ENCODE measurements at regions of chr22 and their contacts with region 1.

Region 1: GRCh38 chr22:38506118-38506962 is at the start of gene DDX17:
- DNase-seq: peak; percentile 90 to 98 (median 94)
- ATAC-seq: peak; percentile 88
- H3K4me3 ChIP-seq: peak within 1 kb of the TSS; percentile 69
- H3K4me3 Mint-ChIP-seq: peak within 1 kb of the TSS; percentile 100
- H3K27ac ChIP-seq: peak within 1 kb of the TSS; percentile 98 to 100
- H3K27ac Mint-ChIP-seq: peak within 1 kb of the TSS; percentile 99
- H3K4me1 ChIP-seq: peaks cover 25% of the 10 kb centered on the region
- H3K4me1 Mint-ChIP-seq: peaks cover 57% of the 10 kb centered on the region
- H3K27me3 ChIP-seq: no peaks in the 10 kb centered on the region
- H3K27me3 Mint-ChIP-seq: no peaks in the 10 kb centered on the region
- CTCF ChIP-seq: no peak
- total RNA-seq, gene DDX17: 454 to 462 TPM

Region 2: GRCh38 chr22:38398609-38399461 is 107.5 kb before region 1 on chr22:
- CTCF ChIA-PET with region 1: no interaction called
- POLR2A ChIA-PET with region 1: no interaction called
- intact Hi-C with region 1: loop called (anchors 5 to 10 kb)
- DNase-seq: peak; percentile 72 to 91 (median 86)
- ATAC-seq: peak; percentile 73
- H3K4me3 ChIP-seq: peak overlapping the region; percentile 68
- H3K4me3 Mint-ChIP-seq: peak overlapping the region; percentile 86
- H3K27ac ChIP-seq: no peak overlapping the region
- H3K27ac Mint-ChIP-seq: peak overlapping the region; percentile 75
- H3K4me1 ChIP-seq: peaks cover 15% of the 10 kb centered on the region
- H3K4me1 Mint-ChIP-seq: peaks cover 35% of the 10 kb centered on the region
- H3K27me3 ChIP-seq: no peaks in the 10 kb centered on the region
- H3K27me3 Mint-ChIP-seq: no peaks in the 10 kb centered on the region
- CTCF ChIP-seq: no peak

Region 3: DNA sequence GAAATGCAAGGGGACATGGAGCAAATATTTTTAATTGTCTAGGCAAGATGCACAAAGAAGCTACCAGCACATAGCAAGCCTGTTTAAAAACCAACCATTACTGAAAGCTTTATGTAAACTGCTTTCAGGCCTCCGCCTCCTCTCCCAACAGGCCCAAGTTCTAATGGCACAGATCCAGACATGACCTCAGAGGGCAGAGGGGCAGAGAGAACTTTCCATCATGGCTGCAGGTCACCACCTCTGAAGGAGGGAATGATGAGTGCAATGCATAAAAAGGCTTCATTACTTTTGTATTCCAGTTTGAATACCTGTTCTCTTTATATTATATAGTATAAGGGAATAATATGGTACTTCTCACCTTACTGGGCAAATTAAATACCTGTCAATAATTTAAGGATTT is 15.4 kb before region 1 on chr22:
- CTCF ChIA-PET with region 1: interaction called, 3 read pairs
- POLR2A ChIA-PET with region 1: interaction called, 15 read pairs
- intact Hi-C with region 1: loop called in 1 of 2 experiments (anchors 2 kb)
- DNase-seq: no peak
- ATAC-seq: no peak
- H3K4me3 ChIP-seq: no peak overlapping the region
- H3K4me3 Mint-ChIP-seq: no peak overlapping the region
- H3K27ac ChIP-seq: no peak overlapping the region
- H3K27ac Mint-ChIP-seq: peak overlapping the region; percentile 63
- H3K4me1 ChIP-seq: peaks cover 20% of the 10 kb centered on the region
- H3K4me1 Mint-ChIP-seq: peaks cover 62% of the 10 kb centered on the region
- H3K27me3 ChIP-seq: no peaks in the 10 kb centered on the region
- H3K27me3 Mint-ChIP-seq: no peaks in the 10 kb centered on the region
- CTCF ChIP-seq: no peak

Region 4: DNA sequence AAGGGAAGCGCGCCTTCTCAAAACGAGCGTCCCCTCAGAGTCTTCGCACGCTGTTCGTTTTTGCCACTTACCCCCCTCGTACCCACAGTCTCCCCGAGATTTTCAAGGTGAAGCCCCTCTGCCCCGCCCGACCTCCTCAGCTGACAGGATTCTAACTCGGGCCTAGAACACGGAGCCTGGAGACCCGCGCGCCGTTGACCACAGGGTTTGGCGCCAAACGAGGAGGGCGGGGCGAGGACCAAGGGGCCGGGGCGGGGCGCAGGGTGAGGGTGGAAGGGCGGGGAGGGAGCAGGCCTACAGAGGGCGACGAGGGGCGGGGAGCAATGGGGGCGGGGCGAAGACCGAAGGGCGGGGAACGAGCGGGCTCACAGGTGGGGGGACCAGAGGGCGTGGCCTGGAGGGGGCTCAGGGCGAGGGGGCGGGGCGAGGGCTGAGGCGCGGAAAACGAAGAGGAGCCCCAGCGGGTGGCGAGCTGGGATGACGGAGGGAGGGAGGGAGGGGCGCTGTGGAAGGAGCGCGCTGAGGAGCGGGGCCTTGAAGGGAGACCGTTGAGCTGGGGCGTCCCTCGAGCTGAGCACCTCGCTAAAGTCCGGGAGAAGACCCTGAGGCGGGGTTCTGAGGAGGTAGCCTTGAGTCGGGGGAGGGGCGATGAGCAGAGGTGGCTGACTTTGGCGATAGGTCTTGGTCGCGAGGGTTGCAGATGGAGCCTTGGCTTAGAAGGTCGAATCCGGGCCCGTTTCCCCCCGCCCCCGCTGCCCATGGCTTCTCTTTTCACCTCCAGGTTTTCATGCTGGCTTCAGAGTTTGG is 63.8 kb after region 1 on chr22 and contains the start of gene DMC1:
- CTCF ChIA-PET with region 1: no interaction called
- POLR2A ChIA-PET with region 1: interaction called, 4 read pairs
- intact Hi-C with region 1: loop called (anchors 1 kb)
- DNase-seq: peak; percentile 93 to 100 (median 97)
- ATAC-seq: peak; percentile 92
- H3K4me3 ChIP-seq: peak within 1 kb of the TSS; percentile 89
- H3K4me3 Mint-ChIP-seq: peak within 1 kb of the TSS; percentile 90
- H3K27ac ChIP-seq: peak within 1 kb of the TSS in 1 of 2 donors; percentile 44
- H3K27ac Mint-ChIP-seq: peak within 1 kb of the TSS; percentile 80
- H3K4me1 ChIP-seq: peaks cover 20% of the 10 kb centered on the region
- H3K4me1 Mint-ChIP-seq: peaks cover 17% of the 10 kb centered on the region
- H3K27me3 ChIP-seq: no peaks in the 10 kb centered on the region
- H3K27me3 Mint-ChIP-seq: no peaks in the 10 kb centered on the region
- CTCF ChIP-seq: no peak
- total RNA-seq, gene DMC1: 0.52 to 0.95 TPM

Region 5: DNA sequence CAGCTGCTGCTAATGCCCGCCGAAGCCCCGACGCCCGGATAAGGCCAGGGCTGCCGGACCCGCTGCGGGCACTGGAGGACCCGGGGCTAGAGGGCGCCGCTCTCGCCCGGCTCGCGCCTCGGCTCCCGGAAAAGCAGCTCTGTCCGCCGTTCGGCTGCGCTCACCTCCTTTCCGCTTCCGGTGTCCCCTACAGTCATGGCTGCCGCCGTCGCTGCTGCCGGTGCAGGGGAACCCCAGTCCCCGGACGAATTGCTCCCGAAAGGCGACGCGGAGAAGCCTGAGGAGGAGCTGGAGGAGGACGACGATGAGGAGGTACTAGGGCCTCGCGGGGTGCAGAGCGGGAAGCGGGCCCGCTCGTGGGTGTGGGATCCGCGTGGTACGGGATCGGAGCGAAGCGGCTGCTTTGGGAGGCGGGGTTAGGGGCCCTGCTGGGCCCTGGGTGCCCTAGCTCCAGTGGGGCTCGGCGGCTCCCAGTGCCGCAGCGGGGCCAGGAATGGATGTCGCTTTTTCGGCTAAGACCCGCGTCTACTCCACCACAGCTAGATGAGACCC is 175.5 kb after region 1 on chr22 and contains the start of gene TOMM22:
- CTCF ChIA-PET with region 1: no interaction called
- POLR2A ChIA-PET with region 1: interaction called, 4 read pairs
- intact Hi-C with region 1: loop called in 1 of 2 experiments (anchors 10 kb)
- DNase-seq: peak; percentile 67 to 92 (median 80)
- ATAC-seq: peak; percentile 88
- H3K4me3 ChIP-seq: peak within 1 kb of the TSS; percentile 98
- H3K4me3 Mint-ChIP-seq: peak within 1 kb of the TSS; percentile 98
- H3K27ac ChIP-seq: peak within 1 kb of the TSS; percentile 79 to 84
- H3K27ac Mint-ChIP-seq: peak within 1 kb of the TSS; percentile 87
- H3K4me1 ChIP-seq: peaks cover 18% of the 10 kb centered on the region
- H3K4me1 Mint-ChIP-seq: peaks cover 24% of the 10 kb centered on the region
- H3K27me3 ChIP-seq: no peaks in the 10 kb centered on the region
- H3K27me3 Mint-ChIP-seq: no peaks in the 10 kb centered on the region
- CTCF ChIP-seq: peak; percentile 65
- total RNA-seq, gene TOMM22: 53.7 to 54.8 TPM

Measured in CD4-positive, alpha-beta T cell (primary cell).